ENCODE measurements at regions of chr3 and their contacts with region 1.

Region 1: GRCh38 chr3:107064445-107065060 is 312.7 kb upstream of the CCDC54 start:
- DNase-seq: peak; percentile 13 to 94 (median 80)

Region 2: DNA sequence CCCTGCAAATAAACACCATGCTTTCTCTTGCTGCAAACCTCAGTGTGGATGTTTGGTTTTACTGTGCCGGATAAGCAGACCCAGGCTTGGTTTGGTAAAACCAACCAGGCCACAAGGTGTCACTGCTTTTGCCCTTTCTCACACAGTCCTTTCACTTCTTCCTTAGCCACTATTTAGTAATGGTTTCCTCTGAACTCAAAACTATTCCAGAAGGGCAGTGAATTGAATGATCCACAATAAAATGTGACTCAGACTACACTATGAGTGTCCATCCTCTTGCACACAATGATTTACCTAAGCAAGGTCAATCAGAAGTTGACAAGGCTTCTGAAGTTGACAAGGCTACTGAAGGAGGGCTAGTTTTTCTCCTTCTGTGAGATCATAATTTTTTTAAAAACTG is 239.7 kb before region 1 on chr3:
- intact Hi-C with region 1: loop called (anchors 10 kb)
- DNase-seq: peak in 16 of 42 donors; percentile 8 to 58 (median 26)

Measured in head of caudate nucleus (tissue), 42 donors.